Activated naive CD4-positive, alpha-beta T cell treated with anti-CD3 and anti-CD28 coated beads for 36 hours (primary cell): ENCODE measurements at regions of chr9 and their contacts with region 1.

Region 1: GRCh38 chr9:93453047-93453914 is at the start of gene FAM120AOS:
- DNase-seq: peak; percentile 92
- H3K4me3 Mint-ChIP-seq: peak within 1 kb of the TSS; percentile 87
- H3K27ac Mint-ChIP-seq: peak within 1 kb of the TSS; percentile 84
- H3K4me1 Mint-ChIP-seq: peaks cover 45% of the 10 kb centered on the region
- H3K27me3 Mint-ChIP-seq: no peaks in the 10 kb centered on the region
- total RNA-seq, gene FAM120AOS: 25.5 to 26.0 TPM

Region 2: GRCh38 chr9:92954049-92954861 is 499.0 kb before region 1 on chr9:
- CTCF ChIA-PET with region 1: no interaction called
- intact Hi-C with region 1: loop called (anchors 5 kb)
- DNase-seq: peak; percentile 95
- H3K4me3 Mint-ChIP-seq: peak overlapping the region; percentile 60
- H3K27ac Mint-ChIP-seq: peak overlapping the region; percentile 91
- H3K4me1 Mint-ChIP-seq: peaks cover 75% of the 10 kb centered on the region
- H3K27me3 Mint-ChIP-seq: no peaks in the 10 kb centered on the region

Region 3: DNA sequence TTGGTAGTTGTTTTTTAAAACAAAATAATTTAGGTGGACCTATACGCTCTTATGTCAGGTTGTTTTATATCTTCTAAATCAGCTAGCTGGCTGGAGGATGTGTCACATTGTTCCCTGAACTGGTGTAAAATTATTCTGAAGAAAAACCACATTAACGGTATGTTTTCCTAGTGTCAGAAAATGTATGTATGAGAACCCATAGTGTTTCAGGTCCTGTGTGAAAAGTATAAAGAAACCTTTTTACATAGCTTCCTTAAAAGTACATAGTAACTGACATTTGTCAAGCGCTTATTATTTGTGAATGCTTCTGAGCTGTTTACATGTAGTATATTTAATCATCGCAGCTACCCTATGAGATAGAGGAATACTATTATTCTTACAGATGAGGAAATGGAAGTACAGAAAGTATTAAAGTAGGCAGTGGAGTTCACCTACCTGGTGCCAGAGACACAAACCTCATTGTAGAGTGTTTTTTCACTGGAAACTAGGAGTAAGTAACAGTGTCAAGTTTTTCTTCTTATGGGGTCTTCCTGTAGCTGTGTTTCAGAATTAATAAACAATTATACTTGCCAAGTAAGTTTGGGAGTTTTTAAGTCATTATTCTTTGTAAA is 10.5 kb after region 1 on chr9:
- CTCF ChIA-PET with region 1: interaction called, 12 read pairs
- intact Hi-C with region 1: loop called (anchors 1 kb)
- DNase-seq: no peak
- H3K4me3 Mint-ChIP-seq: no peak overlapping the region
- H3K27ac Mint-ChIP-seq: peak overlapping the region; percentile 65
- H3K4me1 Mint-ChIP-seq: peaks cover 86% of the 10 kb centered on the region
- H3K27me3 Mint-ChIP-seq: no peaks in the 10 kb centered on the region

Region 4: GRCh38 chr9:93566408-93567270 is 113.4 kb after region 1 on chr9:
- CTCF ChIA-PET with region 1: interaction called, 18 read pairs
- intact Hi-C with region 1: loop called (anchors 1 kb)
- DNase-seq: peak; percentile 99
- H3K4me3 Mint-ChIP-seq: peak overlapping the region; percentile 90
- H3K27ac Mint-ChIP-seq: peak overlapping the region; percentile 92
- H3K4me1 Mint-ChIP-seq: peaks cover 26% of the 10 kb centered on the region
- H3K27me3 Mint-ChIP-seq: no peaks in the 10 kb centered on the region

Region 5: GRCh38 chr9:93962561-93963440 is 509.5 kb after region 1 on chr9:
- CTCF ChIA-PET with region 1: no interaction called
- intact Hi-C with region 1: loop called (anchors 10 kb)
- DNase-seq: peak; percentile 92
- H3K4me3 Mint-ChIP-seq: no peak overlapping the region
- H3K27ac Mint-ChIP-seq: no peak overlapping the region
- H3K4me1 Mint-ChIP-seq: peaks cover 35% of the 10 kb centered on the region
- H3K27me3 Mint-ChIP-seq: peaks cover 40% of the 10 kb centered on the region